ENCODE measurements at regions of chr12 and their contacts with region 1.

Region 1: DNA sequence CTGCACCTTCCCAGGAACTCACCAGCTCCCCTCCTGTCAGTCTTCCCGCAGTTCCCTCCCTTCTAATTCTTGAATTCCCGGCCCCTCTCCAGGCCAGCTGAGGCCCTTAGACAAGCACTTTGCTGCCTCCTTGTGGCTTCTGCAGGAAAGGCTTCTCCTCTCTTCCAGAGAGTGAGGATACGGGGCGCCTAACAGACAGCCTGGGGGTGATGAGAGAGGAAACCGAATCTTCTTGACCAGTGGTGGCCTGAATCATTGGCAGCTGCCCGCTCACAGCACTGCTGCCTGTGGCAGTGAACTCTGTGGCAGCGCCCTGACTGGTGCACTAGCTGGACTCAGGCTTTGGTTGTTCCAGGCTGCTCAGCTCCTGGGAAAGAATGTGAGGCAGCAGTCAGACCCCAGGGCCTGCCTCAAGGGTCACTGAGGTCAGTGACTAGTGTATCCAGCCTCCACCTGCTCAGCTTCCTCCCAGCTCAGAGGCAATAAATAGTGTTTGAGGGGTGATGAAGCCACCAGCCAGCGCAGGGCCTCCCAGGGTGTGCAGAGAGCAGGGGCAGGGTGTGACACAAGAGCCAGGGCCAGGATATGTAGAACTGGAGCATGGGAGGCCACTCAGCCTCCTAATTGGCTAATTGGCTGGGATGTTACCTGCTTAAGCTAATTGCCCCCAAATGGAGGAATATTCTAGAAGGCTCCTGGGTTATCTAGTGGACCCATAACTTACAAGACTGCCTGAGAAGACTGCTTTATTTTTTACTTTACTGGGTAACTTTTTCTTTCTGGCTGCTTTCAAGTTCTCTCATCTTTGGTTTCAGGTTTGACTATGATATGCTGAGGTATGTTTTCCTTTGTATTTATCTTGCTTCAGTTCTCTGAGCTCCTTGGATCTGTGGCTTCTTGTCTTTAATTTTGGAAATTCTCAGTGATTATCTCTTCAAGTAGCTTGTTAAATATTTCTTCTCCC is 12.9 kb upstream of the MCRS1 start:
- DNase-seq: peak; percentile 45 to 80
- ATAC-seq: peak; percentile 65 to 87 (median 80)
- H3K4me3 ChIP-seq: no peak overlapping the region
- H3K27ac ChIP-seq: peak overlapping the region in 6 of 10 donors; percentile 25 to 80 (median 48)
- H3K4me1 ChIP-seq: peaks cover 6 to 54% (median 28%) of the 10 kb centered on the region in 9 donors
- H3K27me3 ChIP-seq: no peaks in the 10 kb centered on the region
- CTCF ChIP-seq: peak; percentile 57 to 89 (median 84)

Region 2: DNA sequence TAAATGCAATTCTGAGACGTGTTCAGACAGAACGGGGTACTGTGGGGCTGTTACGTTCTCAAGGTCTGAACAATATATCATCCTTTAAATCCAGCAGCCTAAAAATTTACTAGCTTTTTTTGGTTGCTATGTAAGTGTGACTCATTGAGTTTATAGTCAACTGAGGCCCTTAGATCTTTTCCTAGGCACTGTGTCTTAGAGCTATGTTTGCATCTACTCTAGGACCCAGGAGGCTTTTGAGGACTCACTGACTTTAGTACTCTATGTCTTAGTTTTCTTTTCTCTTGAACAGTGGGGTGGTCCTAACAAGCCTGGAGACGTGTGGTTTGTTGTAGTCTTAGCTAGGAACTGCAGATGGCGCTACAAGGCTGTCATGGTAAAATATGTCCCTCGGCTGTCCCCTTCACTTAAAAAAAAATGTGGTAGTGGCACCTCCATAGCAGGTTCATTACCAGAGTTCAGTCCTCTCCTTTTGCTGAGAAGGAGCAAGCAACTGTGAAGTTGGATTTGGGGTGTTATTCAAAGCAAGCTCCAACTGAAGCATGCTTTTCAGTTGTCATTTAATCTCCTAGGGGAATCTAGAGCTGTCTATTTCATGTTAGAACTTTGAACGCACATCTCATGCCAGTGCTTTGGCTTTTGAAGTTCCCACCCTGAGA is 222.2 kb before region 1 on chr12:
- intact Hi-C with region 1: loop called in 8 of 10 experiments (anchors 1 to 10 kb)
- DNase-seq: peak in 1 of 2 donors; percentile 58
- ATAC-seq: peak; percentile 74 to 91 (median 80)
- H3K4me3 ChIP-seq: no peak overlapping the region
- H3K27ac ChIP-seq: no peak overlapping the region
- H3K4me1 ChIP-seq: peaks cover 0 to 6% (median 0%) of the 10 kb centered on the region in 9 donors
- H3K27me3 ChIP-seq: peaks cover 0 to 33% (median 5%) of the 10 kb centered on the region in 7 donors
- CTCF ChIP-seq: peak; percentile 71 to 90 (median 83)

Region 3: DNA sequence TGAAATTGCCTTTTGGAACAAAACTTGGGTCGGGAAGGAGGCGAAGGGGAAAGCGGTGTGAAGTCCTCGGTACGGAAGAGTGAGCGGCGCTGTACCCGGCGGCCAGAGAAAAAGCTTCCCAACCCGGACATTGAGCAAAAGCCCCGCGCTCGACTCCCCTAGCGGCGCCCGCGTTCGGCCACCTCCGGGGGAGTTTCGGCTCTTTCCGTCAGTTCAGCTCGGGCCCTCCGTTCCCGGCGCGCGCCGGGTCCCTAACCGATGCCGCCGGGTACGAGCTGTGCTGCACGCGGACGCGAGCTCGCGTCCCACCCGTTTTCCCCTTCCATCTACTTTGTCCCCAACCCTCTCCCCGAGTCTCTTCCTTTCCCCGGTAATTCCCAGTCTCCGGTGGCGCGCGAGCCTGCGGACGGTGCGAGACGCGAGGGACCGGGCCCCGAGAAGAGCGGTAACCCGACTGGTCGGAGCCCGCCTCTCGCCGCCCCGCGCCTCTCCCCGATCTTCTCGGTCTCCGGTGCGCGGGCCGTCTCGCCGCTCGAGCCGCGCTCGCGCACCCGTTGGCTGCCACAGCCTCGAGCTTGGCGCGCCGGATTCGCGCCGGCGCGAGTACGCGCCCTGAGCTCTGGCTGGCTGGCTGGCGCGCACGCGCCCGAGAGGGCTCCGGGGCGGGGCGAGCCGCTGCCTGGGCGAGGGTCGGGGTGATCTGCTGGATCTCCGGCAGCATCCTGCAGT is 214.0 kb before region 1 on chr12:
- intact Hi-C with region 1: loop called in 2 of 10 experiments (anchors 5 to 10 kb)
- DNase-seq: peak; percentile 90 to 91
- ATAC-seq: peak; percentile 90 to 97 (median 95)
- H3K4me3 ChIP-seq: peak overlapping the region; percentile 52 to 93 (median 90)
- H3K27ac ChIP-seq: peak overlapping the region; percentile 88 to 99 (median 95)
- H3K4me1 ChIP-seq: peaks cover 0 to 47% (median 31%) of the 10 kb centered on the region in 9 donors
- H3K27me3 ChIP-seq: no peaks in the 10 kb centered on the region
- CTCF ChIP-seq: peak in 7 of 9 donors; percentile 8 to 59 (median 41)

Region 4: DNA sequence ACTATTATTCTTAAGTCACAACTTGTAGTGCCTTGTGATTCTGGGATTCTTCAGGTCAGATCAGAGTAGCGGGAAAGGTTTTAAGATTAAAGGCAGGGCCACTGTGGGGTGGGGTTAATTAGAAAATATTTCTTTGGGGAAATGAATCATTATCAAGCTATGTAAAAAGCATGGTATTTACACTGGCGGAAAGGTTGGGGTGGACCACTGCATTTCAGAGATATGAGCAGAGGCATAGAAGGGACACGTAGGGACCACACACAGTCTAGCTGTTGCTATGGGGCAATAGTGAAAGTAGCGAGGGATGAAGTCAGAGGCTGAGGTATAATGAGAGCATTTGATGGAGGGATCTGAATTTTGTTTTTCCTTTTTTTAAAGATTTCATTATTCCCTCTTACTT is 73.7 kb before region 1 on chr12:
- intact Hi-C with region 1: no loop called
- DNase-seq: no peak
- ATAC-seq: peak in 1 of 8 donors; percentile 44
- H3K4me3 ChIP-seq: no peak overlapping the region
- H3K27ac ChIP-seq: no peak overlapping the region
- H3K4me1 ChIP-seq: peaks cover 0 to 15% (median 5%) of the 10 kb centered on the region in 9 donors
- H3K27me3 ChIP-seq: no peaks in the 10 kb centered on the region
- CTCF ChIP-seq: no peak

Region 5: DNA sequence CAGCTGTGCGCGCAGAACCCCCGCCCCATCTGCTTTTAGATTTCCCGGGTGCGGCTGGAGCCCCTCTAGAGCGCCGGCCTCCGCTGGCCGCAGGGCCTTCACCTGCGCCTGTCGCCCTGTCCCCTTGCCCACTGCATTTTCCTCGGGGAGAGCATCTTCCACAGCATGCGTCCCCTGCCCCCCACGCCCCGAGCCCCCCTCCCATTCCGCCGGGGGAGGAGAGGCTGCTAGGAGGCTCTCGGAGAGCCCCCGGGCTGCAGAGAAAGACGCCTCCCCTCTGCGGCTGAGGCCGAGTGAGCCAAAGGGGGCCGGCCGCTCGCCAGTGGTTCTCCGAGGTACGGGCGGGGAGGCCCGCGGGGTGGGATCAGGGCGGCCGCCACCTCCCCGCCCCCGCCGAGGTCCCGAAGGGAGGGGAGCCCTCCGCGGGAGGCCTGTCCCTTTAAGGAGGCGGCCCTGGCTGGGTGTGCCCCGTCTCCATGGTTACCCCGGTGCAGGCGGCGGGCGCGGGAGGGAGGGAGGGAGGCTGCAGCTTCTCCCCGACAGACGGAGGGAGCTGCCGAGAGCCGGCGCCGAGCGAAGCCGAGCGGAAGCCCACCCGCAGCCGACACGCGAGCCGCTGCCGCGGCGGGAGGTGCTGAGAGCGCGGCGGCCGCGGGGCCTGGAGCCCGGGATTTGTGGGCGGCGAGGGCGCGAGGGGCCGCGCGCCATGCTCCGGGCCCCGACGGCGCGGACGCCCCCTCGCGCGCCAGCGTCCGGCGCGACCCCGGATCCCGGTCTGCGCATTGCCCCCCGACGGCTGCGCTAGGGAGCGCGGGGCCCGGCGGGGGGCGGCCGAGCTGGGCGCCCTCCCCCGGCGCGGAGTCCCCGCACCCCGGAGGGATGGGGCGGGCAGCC is 42.1 kb before region 1 on chr12 and contains the start of gene KCNH3:
- intact Hi-C with region 1: loop called in 1 of 10 experiments (anchors 10 kb)
- DNase-seq: peak; percentile 80 to 84
- ATAC-seq: peak; percentile 69 to 88 (median 83)
- H3K4me3 ChIP-seq: peak within 1 kb of the TSS; percentile 39 to 60 (median 54)
- H3K27ac ChIP-seq: peak within 1 kb of the TSS in 1 of 10 donors; percentile 20
- H3K4me1 ChIP-seq: peaks cover 0 to 39% (median 14%) of the 10 kb centered on the region in 9 donors
- H3K27me3 ChIP-seq: peaks cover 0 to 54% (median 36%) of the 10 kb centered on the region in 7 donors
- CTCF ChIP-seq: peak in 1 of 9 donors; percentile 7
- total RNA-seq, gene KCNH3: 0.16 to 1.2 (median 0.26) TPM

Region 6: GRCh38 chr12:49553512-49554088 is 27.3 kb before region 1 on chr12:
- intact Hi-C with region 1: loop called in 1 of 10 experiments (anchors 2 kb)
- DNase-seq: no peak
- ATAC-seq: peak in 1 of 8 donors; percentile 15
- H3K4me3 ChIP-seq: no peak overlapping the region
- H3K27ac ChIP-seq: peak overlapping the region in 1 of 10 donors; percentile 35
- H3K4me1 ChIP-seq: peaks cover 0 to 30% (median 19%) of the 10 kb centered on the region in 9 donors
- H3K27me3 ChIP-seq: peaks cover 0 to 21% (median 1%) of the 10 kb centered on the region in 7 donors
- CTCF ChIP-seq: peak in 7 of 9 donors; percentile 31 to 56 (median 45)